Activated CD8-positive, alpha-beta T cell treated with anti-CD3 and anti-CD28 coated beads for 36 hours (primary cell): ENCODE measurements at regions of chr11 and their contacts with region 1.

Region 1: DNA sequence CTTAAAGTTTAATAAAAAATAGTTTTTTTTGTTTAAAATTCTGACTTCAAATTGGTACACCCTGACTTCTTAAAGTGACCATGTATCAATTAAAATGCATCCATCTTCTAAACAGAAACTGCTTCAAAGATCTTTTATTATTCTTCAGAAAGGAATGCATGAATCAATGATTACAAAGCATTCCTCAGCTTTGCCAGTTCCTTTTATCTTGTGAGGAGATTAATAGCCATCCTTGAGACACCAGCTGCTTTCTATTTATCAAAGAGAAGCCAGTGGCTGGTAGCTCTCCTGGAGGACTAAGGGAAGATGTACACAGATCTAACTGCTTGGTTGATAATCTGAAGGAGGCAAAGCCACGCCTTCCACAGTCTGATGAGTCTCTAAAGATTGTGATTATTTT is 2222.5 kb downstream of the LRRC4C start:
- DNase-seq: no peak
- ATAC-seq: no peak
- H3K4me3 Mint-ChIP-seq: no peak overlapping the region
- H3K27ac Mint-ChIP-seq: no peak overlapping the region
- H3K4me1 Mint-ChIP-seq: no peaks in the 10 kb centered on the region
- H3K27me3 Mint-ChIP-seq: no peaks in the 10 kb centered on the region
- CTCF ChIP-seq: no peak

Region 2: DNA sequence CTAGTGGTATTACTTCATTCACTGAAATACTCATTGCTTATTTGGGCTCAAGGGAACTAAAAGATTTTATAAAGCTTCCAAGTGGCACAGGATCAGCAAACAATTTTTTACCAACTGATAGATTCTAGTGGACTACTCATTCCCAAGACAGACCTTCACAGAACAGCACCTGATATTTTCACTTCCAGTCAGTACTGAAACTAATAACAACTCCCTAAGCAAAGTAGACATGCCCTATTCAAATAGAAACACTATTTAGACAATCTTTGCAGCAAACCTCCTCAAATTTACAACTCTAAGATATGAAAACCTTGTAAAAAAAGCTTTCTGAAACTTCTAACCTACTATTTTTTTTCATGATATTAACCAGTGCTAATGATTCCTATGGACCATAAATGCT is 123.3 kb before region 1 on chr11:
- CTCF ChIA-PET with region 1: no interaction called
- POLR2A ChIA-PET with region 1: no interaction called
- intact Hi-C with region 1: no loop called
- DNase-seq: no peak
- ATAC-seq: no peak
- H3K4me3 Mint-ChIP-seq: no peak overlapping the region
- H3K27ac Mint-ChIP-seq: no peak overlapping the region
- H3K4me1 Mint-ChIP-seq: no peaks in the 10 kb centered on the region
- H3K27me3 Mint-ChIP-seq: no peaks in the 10 kb centered on the region
- CTCF ChIP-seq: no peak

Region 3: DNA sequence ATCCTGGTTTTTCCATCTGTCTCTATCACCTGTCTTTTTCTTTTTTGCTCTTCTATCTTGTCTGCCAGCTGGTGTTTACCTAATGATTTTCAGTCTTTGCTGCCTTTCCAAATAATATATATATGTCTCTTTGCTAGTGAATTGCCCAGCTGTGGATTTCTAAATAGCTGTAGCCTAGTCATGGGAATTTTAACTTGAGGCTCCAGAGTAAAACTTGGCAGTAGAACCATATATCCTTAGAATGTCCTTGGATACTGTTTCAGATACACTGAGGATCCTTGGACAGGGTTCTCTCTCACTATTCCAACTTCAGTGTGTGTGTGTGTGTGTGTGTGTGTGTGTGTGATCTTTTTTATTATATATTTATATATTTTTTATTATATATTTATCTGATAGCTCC is 62.7 kb before region 1 on chr11:
- CTCF ChIA-PET with region 1: no interaction called
- POLR2A ChIA-PET with region 1: no interaction called
- intact Hi-C with region 1: loop called (anchors 10 kb)
- DNase-seq: no peak
- ATAC-seq: no peak
- H3K4me3 Mint-ChIP-seq: no peak overlapping the region
- H3K27ac Mint-ChIP-seq: no peak overlapping the region
- H3K4me1 Mint-ChIP-seq: no peaks in the 10 kb centered on the region
- H3K27me3 Mint-ChIP-seq: no peaks in the 10 kb centered on the region
- CTCF ChIP-seq: no peak